Ascending aorta (tissue), 2 donors: ENCODE measurements at regions of chr9 and their contacts with region 1.

Region 1: DNA sequence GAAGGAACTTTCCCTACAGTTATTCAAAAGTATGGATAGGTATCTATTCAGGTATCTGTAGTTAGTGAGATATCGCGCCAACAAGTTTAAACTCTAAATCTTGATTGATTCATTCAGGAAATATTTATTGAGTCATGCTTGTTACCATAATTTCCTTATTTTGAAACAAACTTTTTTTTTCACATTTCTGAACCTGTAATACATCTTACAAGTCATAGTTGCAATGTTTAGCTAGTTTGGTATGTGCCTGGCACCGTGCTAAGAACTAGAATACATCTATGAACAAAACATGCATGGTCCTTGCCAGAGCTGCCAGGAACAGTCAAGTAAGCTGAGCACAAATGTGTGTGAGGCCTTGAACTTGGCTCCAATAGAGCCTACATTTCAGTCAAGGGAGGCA is 226.4 kb downstream of the PCSK5 start:
- DNase-seq: peak; percentile 41 to 94
- H3K4me3 ChIP-seq: no peak overlapping the region
- H3K27ac ChIP-seq: peak overlapping the region; percentile 54 to 81
- H3K4me1 ChIP-seq: peaks cover 9 to 38% of the 10 kb centered on the region in 2 donors
- H3K27me3 ChIP-seq: no peaks in the 10 kb centered on the region
- CTCF ChIP-seq: no peak

Region 2: DNA sequence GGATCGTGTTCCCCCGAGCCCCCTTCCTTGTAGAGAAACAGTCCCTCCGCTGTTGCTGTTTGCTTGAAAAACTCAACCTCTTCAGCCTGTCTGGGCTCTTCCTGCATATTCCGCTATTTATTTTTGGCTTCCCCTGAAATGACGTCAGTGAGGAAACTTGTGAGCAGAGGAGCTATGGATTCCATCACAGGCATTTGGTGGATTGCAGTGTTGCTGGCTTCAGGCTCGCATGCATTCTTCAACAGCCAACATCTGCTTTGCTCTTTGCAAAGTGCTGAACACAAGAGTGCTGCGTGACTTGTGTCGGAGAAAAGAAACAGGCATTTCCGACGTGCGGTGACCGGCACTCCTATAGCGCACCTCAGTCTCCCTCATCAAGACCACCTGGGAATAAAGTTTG is 44.6 kb after region 1 on chr9:
- intact Hi-C with region 1: loop called (anchors 5 kb)
- DNase-seq: no peak
- H3K4me3 ChIP-seq: no peak overlapping the region
- H3K27ac ChIP-seq: peak overlapping the region; percentile 55 to 68
- H3K4me1 ChIP-seq: peaks cover 6 to 23% of the 10 kb centered on the region in 2 donors
- H3K27me3 ChIP-seq: no peaks in the 10 kb centered on the region
- CTCF ChIP-seq: no peak

Region 3: DNA sequence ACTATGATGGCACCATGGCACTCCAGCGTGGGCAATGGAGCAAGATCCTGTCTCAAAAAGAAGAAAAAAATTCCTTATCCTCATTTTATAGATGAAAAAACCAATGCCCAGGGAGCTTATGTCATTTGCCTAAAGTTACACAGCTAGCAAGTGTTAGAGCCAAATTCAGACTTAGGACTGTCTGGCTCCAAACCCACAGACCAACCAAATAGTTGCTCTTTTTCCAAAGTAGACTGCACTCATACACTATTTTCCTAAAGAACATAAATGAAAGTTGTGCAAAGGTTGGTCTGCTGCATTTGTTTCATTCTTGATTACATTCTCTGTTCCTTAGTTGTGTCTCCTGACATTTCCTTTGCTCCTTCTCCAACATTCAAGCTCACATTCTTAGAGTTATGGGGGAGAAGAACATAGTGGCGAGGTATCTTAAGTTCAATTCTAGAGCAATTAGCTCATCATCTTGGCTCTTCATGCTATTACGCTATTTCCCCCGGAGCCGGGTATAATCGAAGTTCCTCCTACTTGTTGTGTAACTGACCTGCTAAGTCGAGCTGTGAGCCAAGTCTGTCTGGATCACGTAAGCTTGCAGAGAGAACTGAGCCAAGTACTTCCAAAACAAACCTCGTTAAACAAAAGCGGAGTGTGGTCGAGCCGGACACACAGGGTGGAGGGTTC is 139.0 kb after region 1 on chr9:
- intact Hi-C with region 1: loop called (anchors 5 kb)
- DNase-seq: peak; percentile 37 to 91
- H3K4me3 ChIP-seq: peak overlapping the region; percentile 11 to 51
- H3K27ac ChIP-seq: peak overlapping the region; percentile 79 to 89
- H3K4me1 ChIP-seq: peaks cover 6 to 12% of the 10 kb centered on the region in 2 donors
- H3K27me3 ChIP-seq: no peaks in the 10 kb centered on the region
- CTCF ChIP-seq: no peak